ENCODE measurements at regions of chr11 and their contacts with region 1.

Region 1: DNA sequence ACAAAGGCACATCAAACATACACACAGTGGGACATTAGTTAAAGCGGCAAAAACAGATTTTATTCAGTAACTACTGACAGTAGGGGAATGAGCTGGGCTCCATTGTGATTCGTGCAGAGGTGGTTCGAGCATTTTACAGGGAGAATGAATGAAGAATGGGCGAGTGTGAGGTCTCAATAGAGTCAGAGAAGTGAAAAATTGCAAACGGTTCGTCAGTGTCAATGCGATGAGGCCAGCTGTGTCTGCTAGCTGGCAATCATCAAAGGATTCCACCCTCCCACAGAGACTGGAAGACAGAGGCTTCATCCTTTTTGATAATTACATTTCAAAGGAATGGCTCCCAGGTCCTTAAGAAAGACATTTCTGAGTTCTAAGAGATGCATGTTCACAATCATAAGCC is 17.4 kb downstream of the OR4D9 start:
- DNase-seq: no peak
- ATAC-seq: no peak
- H3K4me3 ChIP-seq: no peak overlapping the region
- H3K4me3 Mint-ChIP-seq: no peak overlapping the region
- H3K27ac ChIP-seq: no peak overlapping the region
- H3K27ac Mint-ChIP-seq: no peak overlapping the region
- H3K4me1 ChIP-seq: no peaks in the 10 kb centered on the region
- H3K4me1 Mint-ChIP-seq: no peaks in the 10 kb centered on the region
- H3K27me3 ChIP-seq: peaks cover 0 to 10% of the 10 kb centered on the region in 2 experiments
- H3K27me3 Mint-ChIP-seq: peaks cover 7 to 13% of the 10 kb centered on the region in 2 donors

Region 2: DNA sequence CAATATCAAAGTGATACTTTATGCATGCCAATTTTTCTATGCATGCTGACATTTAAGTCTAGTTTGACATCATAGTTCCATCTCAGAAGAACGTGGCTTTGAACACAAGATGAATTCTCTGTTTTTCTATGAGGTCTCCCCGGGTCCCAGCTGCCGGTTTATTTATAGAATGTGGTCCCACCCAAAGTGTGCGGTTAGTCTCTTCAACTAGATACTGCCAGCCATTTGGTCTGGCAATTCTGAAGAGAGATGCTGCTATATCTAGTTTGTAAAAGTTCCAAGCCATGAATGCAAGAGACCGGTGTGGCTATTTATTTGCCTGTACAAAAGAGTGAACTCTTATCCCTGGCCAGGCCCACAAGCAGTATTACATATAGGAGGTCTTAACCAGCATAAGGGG is 111.7 kb before region 1 on chr11:
- CTCF ChIA-PET with region 1: no interaction called
- POLR2A ChIA-PET with region 1: no interaction called
- DNase-seq: peak in 1 of 35 experiments; percentile 3
- ATAC-seq: peak in 1 of 4 experiments; percentile 40
- H3K4me3 ChIP-seq: peak overlapping the region in 1 of 2 donors; percentile 15
- H3K4me3 Mint-ChIP-seq: no peak overlapping the region
- H3K27ac ChIP-seq: no peak overlapping the region
- H3K27ac Mint-ChIP-seq: no peak overlapping the region
- H3K4me1 ChIP-seq: peaks cover 0 to 10% of the 10 kb centered on the region in 2 experiments
- H3K4me1 Mint-ChIP-seq: peaks cover 9 to 17% (median 15%) of the 10 kb centered on the region in 3 donors
- H3K27me3 ChIP-seq: peaks cover 0 to 6% of the 10 kb centered on the region in 2 experiments
- H3K27me3 Mint-ChIP-seq: peaks cover 17 to 19% of the 10 kb centered on the region in 2 donors

Region 3: GRCh38 chr11:59448484-59448883 is 80.2 kb before region 1 on chr11:
- CTCF ChIA-PET with region 1: no interaction called
- POLR2A ChIA-PET with region 1: no interaction called
- DNase-seq: no peak
- ATAC-seq: no peak
- H3K4me3 ChIP-seq: no peak overlapping the region
- H3K4me3 Mint-ChIP-seq: no peak overlapping the region
- H3K27ac ChIP-seq: no peak overlapping the region
- H3K27ac Mint-ChIP-seq: no peak overlapping the region
- H3K4me1 ChIP-seq: no peaks in the 10 kb centered on the region
- H3K4me1 Mint-ChIP-seq: no peaks in the 10 kb centered on the region
- H3K27me3 ChIP-seq: no peaks in the 10 kb centered on the region
- H3K27me3 Mint-ChIP-seq: peaks cover 4% of the 10 kb centered on the region in 2 donors

Region 4: GRCh38 chr11:59510940-59511589 is 17.6 kb before region 1 on chr11 and contains the start of gene OR4D9:
- CTCF ChIA-PET with region 1: no interaction called
- POLR2A ChIA-PET with region 1: no interaction called
- DNase-seq: peak in 2 of 35 experiments; percentile 18 to 19
- ATAC-seq: peak; percentile 91 to 99 (median 96)
- H3K4me3 ChIP-seq: peak within 1 kb of the TSS in 1 of 2 donors; percentile 10
- H3K4me3 Mint-ChIP-seq: peak within 1 kb of the TSS in 2 of 3 donors; percentile 4 to 53
- H3K27ac ChIP-seq: no peak within 1 kb of the TSS
- H3K27ac Mint-ChIP-seq: peak within 1 kb of the TSS; percentile 29 to 37
- H3K4me1 ChIP-seq: peaks cover 7 to 18% of the 10 kb centered on the region in 2 experiments
- H3K4me1 Mint-ChIP-seq: peaks cover 28 to 32% (median 31%) of the 10 kb centered on the region in 3 donors
- H3K27me3 ChIP-seq: no peaks in the 10 kb centered on the region
- H3K27me3 Mint-ChIP-seq: peaks cover 0 to 9% of the 10 kb centered on the region in 2 donors
- total RNA-seq, gene OR4D9: not detected

Region 5: GRCh38 chr11:59550368-59550841 is 21.7 kb after region 1 on chr11:
- CTCF ChIA-PET with region 1: interaction called, 3 to 9 read pairs
- POLR2A ChIA-PET with region 1: interaction called in 1 of 2 experiments, 12 read pairs
- DNase-seq: peak; percentile 70 to 91 (median 82)
- ATAC-seq: peak; percentile 87 to 94 (median 92)
- H3K4me3 ChIP-seq: peak overlapping the region; percentile 73 to 90
- H3K4me3 Mint-ChIP-seq: peak overlapping the region; percentile 85 to 89 (median 87)
- H3K27ac ChIP-seq: peak overlapping the region; percentile 55
- H3K27ac Mint-ChIP-seq: peak overlapping the region; percentile 90 to 92
- H3K4me1 ChIP-seq: peaks cover 8 to 15% of the 10 kb centered on the region in 2 experiments
- H3K4me1 Mint-ChIP-seq: peaks cover 21 to 30% (median 25%) of the 10 kb centered on the region in 3 donors
- H3K27me3 ChIP-seq: no peaks in the 10 kb centered on the region
- H3K27me3 Mint-ChIP-seq: peaks cover 0 to 7% of the 10 kb centered on the region in 2 donors

Measured in T-cell (primary cell).